CD8-positive, alpha-beta T cell (primary cell): ENCODE measurements at regions of chr10 and their contacts with region 1.

Region 1: DNA sequence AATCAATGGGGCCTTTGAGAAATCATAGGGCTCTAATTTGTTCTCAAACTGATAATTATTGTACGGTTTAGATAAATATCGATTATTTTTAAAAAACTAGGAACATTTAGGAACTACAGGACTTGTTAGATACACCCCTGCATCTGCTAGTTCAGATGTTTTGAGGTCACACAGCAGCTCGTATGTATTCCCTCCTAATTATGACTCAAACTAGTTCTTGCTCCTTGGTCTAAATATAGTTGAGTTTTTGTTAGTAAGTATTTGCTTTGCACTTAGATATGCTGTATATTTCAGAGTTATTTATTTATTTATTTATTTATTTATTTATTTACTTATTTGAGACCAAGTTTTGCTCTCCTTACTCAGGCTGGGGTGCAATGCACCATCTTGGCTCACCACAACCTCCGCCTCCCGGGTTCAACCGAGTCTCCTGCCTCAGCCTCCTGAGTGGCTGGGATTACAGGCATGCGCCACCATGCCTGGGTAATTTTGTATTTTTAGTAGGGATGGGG is 22.7 kb downstream of the PTER start:
- DNase-seq: no peak
- ATAC-seq: no peak
- H3K4me3 ChIP-seq: no peak overlapping the region
- H3K4me3 Mint-ChIP-seq: no peak overlapping the region
- H3K27ac ChIP-seq: no peak overlapping the region
- H3K27ac Mint-ChIP-seq: no peak overlapping the region
- H3K4me1 ChIP-seq: no peaks in the 10 kb centered on the region
- H3K4me1 Mint-ChIP-seq: peaks cover 10% of the 10 kb centered on the region
- H3K27me3 ChIP-seq: no peaks in the 10 kb centered on the region
- H3K27me3 Mint-ChIP-seq: no peaks in the 10 kb centered on the region
- CTCF ChIP-seq: no peak

Region 2: DNA sequence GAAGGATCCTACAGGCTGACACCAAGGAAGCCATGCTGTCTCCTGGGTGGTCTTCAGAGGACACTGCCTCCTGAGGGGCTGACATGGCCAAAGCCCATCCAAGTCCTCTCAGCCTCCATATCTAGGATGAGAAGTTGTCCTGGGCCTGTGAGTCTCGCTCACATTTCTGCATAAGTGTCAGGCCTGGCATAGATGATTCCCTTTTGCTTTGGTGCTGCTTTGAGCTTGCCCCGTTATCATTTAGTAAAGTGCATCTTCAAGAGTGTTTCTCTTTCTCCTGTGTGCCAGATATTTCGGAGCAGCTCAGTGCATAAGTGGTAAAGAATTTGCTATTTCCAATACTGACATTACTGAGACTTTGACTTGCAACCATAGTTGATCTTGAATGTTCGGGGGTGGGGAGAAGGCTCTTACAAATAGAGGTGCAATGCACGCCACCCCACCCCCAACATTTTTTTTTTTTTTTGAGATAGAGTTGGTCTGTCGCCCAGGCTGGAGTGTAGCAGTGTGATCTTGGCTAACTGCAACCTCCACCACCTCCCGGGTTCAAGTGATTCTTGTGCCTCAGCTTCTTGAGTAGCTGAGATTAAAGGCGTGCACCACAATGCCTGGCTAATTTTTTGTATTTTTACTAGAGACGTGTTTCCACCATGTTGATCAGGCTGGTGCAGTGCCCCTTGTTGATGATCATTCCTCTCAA is 13.6 kb before region 1 on chr10:
- CTCF ChIA-PET with region 1: no interaction called
- POLR2A ChIA-PET with region 1: no interaction called
- intact Hi-C with region 1: loop called in 1 of 2 experiments (anchors 1 kb)
- DNase-seq: no peak
- ATAC-seq: no peak
- H3K4me3 ChIP-seq: no peak overlapping the region
- H3K4me3 Mint-ChIP-seq: no peak overlapping the region
- H3K27ac ChIP-seq: no peak overlapping the region
- H3K27ac Mint-ChIP-seq: no peak overlapping the region
- H3K4me1 ChIP-seq: peaks cover 4% of the 10 kb centered on the region
- H3K4me1 Mint-ChIP-seq: peaks cover 31% of the 10 kb centered on the region
- H3K27me3 ChIP-seq: no peaks in the 10 kb centered on the region
- H3K27me3 Mint-ChIP-seq: no peaks in the 10 kb centered on the region
- CTCF ChIP-seq: no peak

Region 3: GRCh38 chr10:16470747-16471146 is 11.3 kb after region 1 on chr10:
- CTCF ChIA-PET with region 1: no interaction called
- POLR2A ChIA-PET with region 1: no interaction called
- intact Hi-C with region 1: no loop called
- DNase-seq: peak in 6 of 9 experiments; percentile 9 to 57 (median 32)
- ATAC-seq: no peak
- H3K4me3 ChIP-seq: no peak overlapping the region
- H3K4me3 Mint-ChIP-seq: no peak overlapping the region
- H3K27ac ChIP-seq: peak overlapping the region in 1 of 2 experiments; percentile 29
- H3K27ac Mint-ChIP-seq: no peak overlapping the region
- H3K4me1 ChIP-seq: no peaks in the 10 kb centered on the region
- H3K4me1 Mint-ChIP-seq: peaks cover 20% of the 10 kb centered on the region
- H3K27me3 ChIP-seq: no peaks in the 10 kb centered on the region
- H3K27me3 Mint-ChIP-seq: no peaks in the 10 kb centered on the region
- CTCF ChIP-seq: no peak

Region 4: DNA sequence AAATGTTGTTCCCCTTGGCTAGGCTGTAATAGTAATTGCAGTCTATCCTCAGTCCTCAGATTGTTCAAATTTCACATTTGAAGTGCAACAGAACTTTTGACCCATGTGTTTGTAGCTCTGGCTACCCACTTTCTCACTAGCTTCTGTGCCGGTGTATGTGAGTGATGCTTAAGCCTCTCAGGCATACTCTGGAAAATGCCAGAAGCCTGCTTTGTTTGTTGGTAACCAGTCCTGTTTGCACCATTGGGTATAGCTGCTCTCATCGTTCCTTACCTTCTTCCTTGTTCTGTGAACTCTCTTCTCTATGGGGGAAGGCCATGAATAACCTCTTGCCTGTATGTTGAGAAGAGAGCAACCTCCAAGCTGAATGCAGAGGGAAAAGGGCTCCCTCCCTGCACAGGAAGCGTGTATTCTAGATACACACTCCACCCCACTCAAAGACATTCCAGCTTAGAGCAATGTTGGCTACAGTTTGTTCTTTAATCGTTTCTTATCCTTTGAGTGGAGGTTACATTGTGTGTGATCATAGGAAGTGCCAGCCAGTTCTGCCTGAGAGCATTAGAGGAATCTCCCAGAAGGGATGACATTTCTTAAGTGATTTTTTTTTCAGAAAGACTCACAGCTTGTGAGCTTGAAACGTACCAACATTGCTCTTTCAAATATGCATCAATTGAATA is 21.7 kb after region 1 on chr10:
- CTCF ChIA-PET with region 1: no interaction called
- POLR2A ChIA-PET with region 1: no interaction called
- intact Hi-C with region 1: no loop called
- DNase-seq: no peak
- ATAC-seq: no peak
- H3K4me3 ChIP-seq: no peak overlapping the region
- H3K4me3 Mint-ChIP-seq: no peak overlapping the region
- H3K27ac ChIP-seq: no peak overlapping the region
- H3K27ac Mint-ChIP-seq: no peak overlapping the region
- H3K4me1 ChIP-seq: no peaks in the 10 kb centered on the region
- H3K4me1 Mint-ChIP-seq: no peaks in the 10 kb centered on the region
- H3K27me3 ChIP-seq: no peaks in the 10 kb centered on the region
- H3K27me3 Mint-ChIP-seq: no peaks in the 10 kb centered on the region
- CTCF ChIP-seq: no peak

Region 5: DNA sequence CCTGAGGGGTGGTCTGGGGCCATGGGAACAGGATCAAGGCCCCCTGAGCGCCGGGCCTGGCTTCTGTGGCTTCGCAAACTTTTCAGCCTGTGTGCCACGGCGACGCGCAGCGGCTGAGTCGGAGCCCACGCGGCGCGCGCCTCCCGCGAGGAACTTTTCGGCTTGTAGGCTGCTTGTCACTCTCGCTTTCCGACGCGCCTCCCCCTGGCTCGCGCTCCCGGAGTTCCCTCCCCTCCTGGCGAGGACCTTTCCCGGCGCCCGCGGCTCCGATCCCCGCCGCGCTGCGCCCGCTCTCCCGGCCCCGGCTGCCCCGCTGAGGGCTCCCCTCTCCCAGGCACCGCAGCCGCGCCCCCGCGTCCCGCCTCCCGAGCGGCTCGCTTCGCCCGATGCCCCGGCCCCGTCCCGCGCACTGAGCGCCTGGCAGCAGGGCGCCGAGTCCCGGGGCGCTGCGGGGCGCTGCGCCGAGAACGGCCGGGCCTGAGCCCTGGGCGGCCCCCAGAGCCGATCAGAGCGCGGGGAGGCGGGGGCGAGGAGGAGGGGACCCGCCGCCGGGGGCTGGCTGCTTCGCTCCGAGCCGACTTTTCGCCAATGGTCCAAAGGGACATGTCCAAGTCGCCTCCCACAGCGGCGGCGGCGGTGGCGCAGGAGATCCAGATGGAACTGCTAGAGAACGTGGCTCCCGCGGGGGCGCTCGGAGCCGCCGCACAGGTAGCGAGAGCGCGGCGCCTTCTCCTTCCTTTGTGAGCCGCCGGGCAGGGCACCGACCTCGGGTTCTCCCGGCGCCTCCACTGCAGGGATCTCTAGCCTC is 1680.9 kb after region 1 on chr10 and contains the start of gene CACNB2:
- CTCF ChIA-PET with region 1: no interaction called
- POLR2A ChIA-PET with region 1: no interaction called
- intact Hi-C with region 1: no loop called
- DNase-seq: no peak
- ATAC-seq: no peak
- H3K4me3 ChIP-seq: no peak within 1 kb of the TSS
- H3K4me3 Mint-ChIP-seq: no peak within 1 kb of the TSS
- H3K27ac ChIP-seq: no peak within 1 kb of the TSS
- H3K27ac Mint-ChIP-seq: no peak within 1 kb of the TSS
- H3K4me1 ChIP-seq: no peaks in the 10 kb centered on the region
- H3K4me1 Mint-ChIP-seq: peaks cover 2% of the 10 kb centered on the region
- H3K27me3 ChIP-seq: no peaks in the 10 kb centered on the region
- H3K27me3 Mint-ChIP-seq: peaks cover 26% of the 10 kb centered on the region
- CTCF ChIP-seq: no peak
- total RNA-seq, gene CACNB2: not detected